ENCODE measurements at regions of chr19 and their contacts with region 1.

Region 1: DNA sequence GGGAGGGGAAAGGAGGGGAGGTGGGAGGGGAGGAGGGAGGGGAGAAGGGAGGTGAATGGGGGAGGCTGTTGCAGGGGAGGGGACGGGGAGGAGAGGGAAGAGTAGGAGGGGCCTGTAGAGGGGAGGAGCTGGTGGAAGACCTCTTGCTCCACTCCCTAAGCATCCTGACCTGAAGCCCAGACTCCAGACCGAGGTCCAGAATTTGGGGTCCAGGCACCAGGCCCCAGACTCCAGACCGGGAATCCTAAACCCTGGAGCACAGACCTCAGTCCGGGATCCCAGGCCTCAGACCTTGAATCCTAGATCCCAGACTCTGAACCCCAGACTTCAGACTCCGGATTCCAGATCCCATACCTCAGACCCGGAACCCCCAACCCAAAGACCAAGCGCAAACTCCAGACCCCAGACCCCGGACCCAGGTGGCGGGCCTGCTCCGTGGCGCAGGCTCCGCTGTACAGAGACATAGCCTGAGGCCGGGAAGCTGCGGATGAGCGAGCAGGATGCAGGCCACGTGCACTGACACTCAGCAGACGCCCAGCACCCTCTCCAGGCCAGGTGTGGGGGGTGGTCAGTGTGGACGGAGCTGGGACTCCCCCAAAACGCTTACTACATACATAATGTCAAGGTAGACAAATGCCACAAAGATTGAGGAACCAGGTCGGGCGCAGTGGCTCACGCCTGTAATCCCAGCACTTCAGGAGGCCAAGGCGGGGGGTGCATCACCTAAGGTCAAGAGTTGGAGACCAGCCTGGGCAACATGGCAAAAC is 710 bp upstream of the BTBD2 start:
- DNase-seq: no peak
- ATAC-seq: peak; percentile 73
- H3K4me3 Mint-ChIP-seq: peak overlapping the region; percentile 60
- H3K27ac Mint-ChIP-seq: peak overlapping the region; percentile 56
- H3K4me1 Mint-ChIP-seq: peaks cover 29% of the 10 kb centered on the region
- H3K27me3 Mint-ChIP-seq: no peaks in the 10 kb centered on the region
- CTCF ChIP-seq: no peak

Region 2: GRCh38 chr19:1929021-1929742 is 87.0 kb before region 1 on chr19:
- CTCF ChIA-PET with region 1: no interaction called
- POLR2A ChIA-PET with region 1: interaction called, 12 read pairs
- intact Hi-C with region 1: loop called (anchors 5 kb)
- DNase-seq: peak; percentile 86
- ATAC-seq: peak; percentile 82
- H3K4me3 Mint-ChIP-seq: peak overlapping the region; percentile 81
- H3K27ac Mint-ChIP-seq: no peak overlapping the region
- H3K4me1 Mint-ChIP-seq: peaks cover 46% of the 10 kb centered on the region
- H3K27me3 Mint-ChIP-seq: no peaks in the 10 kb centered on the region
- CTCF ChIP-seq: peak; percentile 59

Region 3: DNA sequence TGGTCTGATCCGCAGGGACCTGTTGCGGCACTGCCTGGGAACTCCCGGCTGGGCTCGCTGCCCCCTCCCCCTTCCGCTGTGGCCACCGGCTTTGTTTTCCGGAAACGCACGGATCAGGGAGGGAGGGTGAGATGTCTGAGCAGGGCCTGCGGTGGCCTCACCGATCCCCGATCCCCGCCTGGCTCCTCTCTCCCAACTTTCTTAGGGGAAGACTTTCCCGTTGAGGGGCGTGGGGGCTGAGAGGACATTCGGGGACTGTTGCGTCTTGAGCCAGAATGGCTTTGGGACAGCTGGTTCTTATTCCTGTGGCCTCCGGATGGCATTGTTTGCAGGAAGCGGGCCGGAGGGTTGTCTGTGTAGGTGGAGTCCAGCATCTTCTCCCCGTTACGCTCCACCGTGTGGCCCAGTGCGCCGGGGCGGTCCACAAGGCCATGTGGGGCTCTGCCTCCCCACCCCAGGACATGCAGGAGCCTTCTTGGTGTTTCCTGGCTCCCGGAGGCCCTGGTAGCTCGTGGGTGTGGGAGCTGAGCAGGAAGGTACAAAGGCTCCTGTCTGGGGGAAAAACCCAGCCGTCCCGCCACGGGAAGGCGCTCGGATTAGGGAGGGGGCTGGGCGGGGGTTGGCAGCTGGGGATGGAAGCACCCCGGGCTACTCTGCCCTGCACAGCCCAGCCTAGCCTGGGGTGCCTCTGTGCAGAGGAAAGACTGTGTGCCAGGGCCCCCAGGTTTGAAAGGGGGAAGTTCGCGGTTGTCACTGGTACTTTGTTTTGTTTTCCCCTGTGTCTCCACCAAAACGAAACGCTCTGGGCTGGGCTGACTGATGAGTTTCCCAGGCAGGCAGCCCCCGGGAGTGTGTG is 73.9 kb before region 1 on chr19:
- CTCF ChIA-PET with region 1: no interaction called
- POLR2A ChIA-PET with region 1: interaction called, 4 read pairs
- intact Hi-C with region 1: loop called (anchors 2 kb)
- DNase-seq: peak; percentile 69
- ATAC-seq: peak; percentile 53
- H3K4me3 Mint-ChIP-seq: peak overlapping the region; percentile 91
- H3K27ac Mint-ChIP-seq: peak overlapping the region; percentile 96
- H3K4me1 Mint-ChIP-seq: peaks cover 46% of the 10 kb centered on the region
- H3K27me3 Mint-ChIP-seq: no peaks in the 10 kb centered on the region
- CTCF ChIP-seq: no peak

Region 4: GRCh38 chr19:2032296-2032941 is 16.2 kb after region 1 on chr19:
- CTCF ChIA-PET with region 1: interaction called, 7 read pairs
- POLR2A ChIA-PET with region 1: interaction called, 8 read pairs
- intact Hi-C with region 1: loop called (anchors 2 kb)
- DNase-seq: no peak
- ATAC-seq: peak; percentile 26
- H3K4me3 Mint-ChIP-seq: peak overlapping the region; percentile 46
- H3K27ac Mint-ChIP-seq: peak overlapping the region; percentile 64
- H3K4me1 Mint-ChIP-seq: peaks cover 28% of the 10 kb centered on the region
- H3K27me3 Mint-ChIP-seq: no peaks in the 10 kb centered on the region
- CTCF ChIP-seq: no peak

Region 5: DNA sequence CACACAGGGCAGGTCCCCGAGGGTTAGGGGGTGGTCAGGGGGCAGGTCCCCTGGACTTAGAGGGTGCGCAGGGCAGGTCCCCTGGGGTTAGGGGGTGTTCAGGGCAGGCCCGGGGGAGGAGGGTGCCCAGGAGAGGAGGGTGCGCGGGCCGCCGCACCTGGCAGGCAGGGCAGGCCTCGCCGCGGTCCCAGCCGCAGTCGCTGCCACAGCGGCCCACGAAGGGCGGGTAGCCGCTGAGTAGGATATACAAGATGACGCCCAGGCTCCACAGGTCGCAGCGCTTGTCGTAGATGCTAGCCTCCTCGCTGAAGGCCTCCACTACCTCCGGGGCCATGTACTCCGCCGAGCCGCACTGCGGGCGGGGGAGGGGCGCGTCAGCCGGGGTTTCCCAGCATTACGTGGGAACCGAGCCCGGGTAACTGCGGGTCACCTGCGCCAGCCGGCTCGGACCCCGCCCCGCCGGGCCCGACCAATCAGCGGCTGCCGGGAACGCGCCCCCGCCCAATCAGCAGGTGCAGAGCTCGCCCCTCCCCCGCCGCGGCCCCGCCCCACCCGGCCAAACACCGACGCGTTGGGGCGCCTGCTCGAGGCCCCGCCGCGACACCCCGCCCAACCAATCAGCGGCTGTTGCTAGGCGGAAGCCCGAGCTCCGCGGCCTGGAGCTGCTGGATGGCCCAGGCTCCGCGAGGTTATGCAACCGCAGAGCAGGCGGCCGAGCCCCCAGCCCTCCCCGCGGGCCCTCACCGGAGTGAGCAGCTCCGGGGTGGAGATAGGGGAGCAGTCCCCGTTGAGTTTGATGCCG is 25.7 kb after region 1 on chr19:
- CTCF ChIA-PET with region 1: interaction called, 8 read pairs
- POLR2A ChIA-PET with region 1: interaction called, 5 read pairs
- intact Hi-C with region 1: loop called (anchors 1 kb)
- DNase-seq: peak; percentile 96
- ATAC-seq: peak; percentile 69
- H3K4me3 Mint-ChIP-seq: peak overlapping the region; percentile 61
- H3K27ac Mint-ChIP-seq: peak overlapping the region; percentile 81
- H3K4me1 Mint-ChIP-seq: peaks cover 70% of the 10 kb centered on the region
- H3K27me3 Mint-ChIP-seq: no peaks in the 10 kb centered on the region
- CTCF ChIP-seq: no peak

Region 6: GRCh38 chr19:2050991-2051772 is 35.0 kb after region 1 on chr19 and contains the start of gene MKNK2:
- CTCF ChIA-PET with region 1: interaction called, 4 read pairs
- POLR2A ChIA-PET with region 1: interaction called, 15 read pairs
- intact Hi-C with region 1: loop called (anchors 2 kb)
- DNase-seq: peak; percentile 99
- ATAC-seq: peak; percentile 61
- H3K4me3 Mint-ChIP-seq: peak within 1 kb of the TSS; percentile 93
- H3K27ac Mint-ChIP-seq: peak within 1 kb of the TSS; percentile 97
- H3K4me1 Mint-ChIP-seq: peaks cover 77% of the 10 kb centered on the region
- H3K27me3 Mint-ChIP-seq: no peaks in the 10 kb centered on the region
- CTCF ChIP-seq: no peak
- total RNA-seq, gene MKNK2: 1,134 and 1,197 TPM in 2 replicates

Region 7: GRCh38 chr19:2110822-2111221 is 94.6 kb after region 1 on chr19:
- CTCF ChIA-PET with region 1: no interaction called
- POLR2A ChIA-PET with region 1: interaction called, 7 read pairs
- intact Hi-C with region 1: loop called (anchors 1 kb)
- DNase-seq: no peak
- ATAC-seq: no peak
- H3K4me3 Mint-ChIP-seq: no peak overlapping the region
- H3K27ac Mint-ChIP-seq: no peak overlapping the region
- H3K4me1 Mint-ChIP-seq: peaks cover 3% of the 10 kb centered on the region
- H3K27me3 Mint-ChIP-seq: no peaks in the 10 kb centered on the region
- CTCF ChIP-seq: no peak

Region 8: DNA sequence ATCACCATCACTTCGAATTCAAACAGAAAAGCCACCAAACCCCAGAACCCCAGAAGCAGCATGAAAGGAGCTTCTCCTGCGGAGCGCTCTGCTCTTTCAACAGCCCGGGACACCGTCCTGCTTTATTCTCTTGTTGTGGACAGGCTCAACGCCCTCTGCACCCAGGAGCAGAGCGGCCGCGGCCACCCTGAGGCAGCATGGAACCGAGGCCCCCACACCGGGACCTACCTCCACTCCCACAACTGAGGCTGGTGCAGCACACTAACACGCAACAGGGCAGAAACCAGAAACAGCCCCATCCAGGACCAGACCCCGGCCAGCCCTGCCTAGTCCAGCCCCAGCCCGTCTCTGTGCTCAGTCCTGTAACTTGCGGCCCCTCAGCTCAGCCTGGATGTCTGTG is 128.0 kb after region 1 on chr19:
- CTCF ChIA-PET with region 1: no interaction called
- POLR2A ChIA-PET with region 1: no interaction called
- intact Hi-C with region 1: no loop called
- DNase-seq: no peak
- ATAC-seq: no peak
- H3K4me3 Mint-ChIP-seq: no peak overlapping the region
- H3K27ac Mint-ChIP-seq: no peak overlapping the region
- H3K4me1 Mint-ChIP-seq: peaks cover 38% of the 10 kb centered on the region
- H3K27me3 Mint-ChIP-seq: no peaks in the 10 kb centered on the region
- CTCF ChIP-seq: no peak